ENCODE measurements at regions of chr15 and their contacts with region 1.

Region 1: GRCh38 chr15:25268166-25268565 is 170.7 kb downstream of the UBE3A start:
- DNase-seq: no peak
- ATAC-seq: no peak
- H3K4me3 Mint-ChIP-seq: no peak overlapping the region
- H3K27ac Mint-ChIP-seq: no peak overlapping the region
- H3K4me1 Mint-ChIP-seq: no peaks in the 10 kb centered on the region
- H3K27me3 Mint-ChIP-seq: no peaks in the 10 kb centered on the region

Region 2: DNA sequence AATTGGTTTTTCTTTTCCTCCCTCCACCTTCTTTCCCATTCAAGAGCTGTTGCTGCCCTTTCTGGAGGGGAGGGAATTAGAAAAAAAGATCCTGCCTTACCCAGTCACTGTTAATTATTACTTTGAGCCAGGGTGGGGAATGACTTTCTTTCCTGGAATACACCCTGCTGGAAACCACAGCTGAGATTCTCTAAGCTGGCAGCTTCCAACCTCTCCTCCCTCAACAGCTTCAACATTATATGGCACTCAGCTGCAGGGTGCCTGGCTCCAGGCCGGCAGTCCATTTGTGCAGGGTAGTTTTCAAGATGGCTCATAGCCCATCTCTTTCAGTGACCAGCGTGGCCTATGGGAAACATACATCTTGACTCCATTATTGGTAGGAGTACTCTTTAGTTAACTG is 64.9 kb after region 1 on chr15:
- CTCF ChIA-PET with region 1: no interaction called
- POLR2A ChIA-PET with region 1: no interaction called
- intact Hi-C with region 1: loop called in 1 of 2 experiments (anchors 10 kb)
- DNase-seq: no peak
- ATAC-seq: no peak
- H3K4me3 Mint-ChIP-seq: no peak overlapping the region
- H3K27ac Mint-ChIP-seq: no peak overlapping the region
- H3K4me1 Mint-ChIP-seq: peaks cover 2% of the 10 kb centered on the region
- H3K27me3 Mint-ChIP-seq: no peaks in the 10 kb centered on the region